Pancreas (tissue), 10 donors: ENCODE measurements at regions of chr14 and their contacts with region 1.

Region 1: DNA sequence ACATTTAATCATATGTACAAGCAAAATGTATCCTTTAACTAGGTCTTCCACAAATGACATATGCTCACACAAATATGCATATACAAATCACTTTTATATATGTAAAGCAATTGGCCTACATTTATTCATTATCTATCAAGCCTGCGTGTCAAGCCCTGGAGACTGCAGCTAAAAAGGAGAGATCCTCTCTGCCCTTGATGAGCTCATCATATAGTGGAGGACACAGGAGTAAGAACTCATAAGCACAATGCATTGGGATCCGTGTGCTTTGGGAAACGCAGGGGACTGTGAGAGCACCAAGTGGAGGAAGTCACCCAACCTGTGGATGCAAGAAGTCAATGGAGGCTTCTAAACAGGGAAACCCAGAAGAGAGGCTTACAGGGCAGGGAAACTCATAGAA is 735.7 kb downstream of the BCL11B start:
- DNase-seq: no peak
- ATAC-seq: no peak
- H3K4me3 ChIP-seq: no peak overlapping the region
- H3K27ac ChIP-seq: no peak overlapping the region
- H3K4me1 ChIP-seq: no peaks in the 10 kb centered on the region
- H3K27me3 ChIP-seq: no peaks in the 10 kb centered on the region
- CTCF ChIP-seq: no peak

Region 2: GRCh38 chr14:97550463-97550862 is 985.8 kb before region 1 on chr14:
- intact Hi-C with region 1: loop called in 1 of 3 experiments (anchors 10 kb)
- DNase-seq: no peak
- ATAC-seq: no peak
- H3K4me3 ChIP-seq: no peak overlapping the region
- H3K27ac ChIP-seq: no peak overlapping the region
- H3K4me1 ChIP-seq: no peaks in the 10 kb centered on the region
- H3K27me3 ChIP-seq: peaks cover 0 to 9% (median 0%) of the 10 kb centered on the region in 4 donors
- CTCF ChIP-seq: no peak